Ascending aorta (tissue), 2 donors: ENCODE measurements at regions of chr4 and their contacts with region 1.

Region 1: DNA sequence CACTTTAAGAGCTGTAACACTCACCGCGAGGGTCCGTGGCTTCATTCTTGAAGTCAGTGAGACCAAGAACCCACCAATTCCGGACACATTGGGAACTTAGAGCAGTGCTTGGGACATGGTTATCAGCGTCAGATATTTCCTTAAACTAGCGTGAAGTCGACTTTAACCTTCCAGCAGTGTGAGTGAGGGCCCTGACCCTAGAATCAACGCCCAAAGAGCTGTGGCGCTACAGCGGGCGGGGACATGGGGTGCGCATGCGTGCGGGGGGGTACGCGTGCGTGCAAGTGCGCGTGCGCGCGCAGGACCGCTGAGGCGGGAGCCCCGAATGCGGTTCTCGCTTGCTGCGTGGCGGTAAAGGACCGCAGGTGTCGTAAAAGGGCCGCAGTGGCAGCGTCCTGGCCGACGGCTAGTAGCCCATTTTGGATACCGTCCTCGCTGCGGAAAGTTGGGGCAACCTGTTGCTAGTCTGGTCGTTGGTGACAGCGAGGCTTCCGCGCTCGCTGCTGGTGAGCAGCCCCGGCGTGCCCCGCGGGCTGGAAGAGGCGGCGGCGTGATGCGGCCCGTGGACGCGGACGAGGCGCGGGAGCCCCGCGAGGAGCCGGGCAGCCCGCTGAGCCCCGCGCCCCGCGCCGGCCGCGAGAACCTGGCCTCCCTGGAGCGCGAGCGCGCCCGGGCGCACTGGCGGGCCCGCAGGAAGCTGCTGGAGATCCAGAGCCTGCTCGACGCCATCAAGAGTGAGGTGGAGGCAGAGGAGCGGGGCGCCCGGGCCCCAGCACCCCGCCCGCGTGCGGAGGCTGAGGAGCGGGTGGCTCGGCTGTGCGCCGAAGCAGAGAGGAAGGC is 19.8 kb upstream of the S100P start:
- DNase-seq: peak; percentile 84 to 96
- H3K4me3 ChIP-seq: peak overlapping the region; percentile 93
- H3K27ac ChIP-seq: peak overlapping the region; percentile 68 to 87
- H3K4me1 ChIP-seq: peaks cover 14 to 26% of the 10 kb centered on the region in 2 donors
- H3K27me3 ChIP-seq: no peaks in the 10 kb centered on the region
- CTCF ChIP-seq: no peak

Region 2: DNA sequence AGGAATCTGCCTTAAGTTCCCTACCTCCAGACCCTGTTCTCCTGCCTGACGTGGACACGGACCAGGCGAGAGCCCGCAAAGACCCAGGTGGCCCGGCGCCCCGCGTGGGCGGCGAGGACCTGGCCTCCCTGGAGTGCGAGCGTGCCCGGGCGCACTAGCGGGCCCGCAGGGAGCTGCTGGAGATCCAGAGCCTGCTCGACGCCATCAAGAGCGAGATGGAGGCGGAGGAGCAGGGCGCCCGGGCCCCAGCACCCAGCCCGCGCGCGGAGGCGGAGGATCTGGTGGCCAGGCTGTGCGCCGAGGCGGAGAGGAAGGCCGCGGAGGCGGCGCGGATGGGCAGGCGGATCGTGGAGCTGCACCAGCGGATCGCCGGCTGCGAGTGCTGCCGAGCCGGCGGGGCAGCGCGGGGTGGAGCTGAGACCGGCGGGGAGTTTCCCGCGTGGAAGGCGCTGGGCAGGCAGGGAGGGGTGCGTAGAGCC is 15.2 kb before region 1 on chr4:
- intact Hi-C with region 1: loop called (anchors 2 kb)
- DNase-seq: no peak
- H3K4me3 ChIP-seq: peak overlapping the region; percentile 62 to 69
- H3K27ac ChIP-seq: peak overlapping the region; percentile 76 to 88
- H3K4me1 ChIP-seq: peaks cover 4 to 6% of the 10 kb centered on the region in 2 donors
- H3K27me3 ChIP-seq: no peaks in the 10 kb centered on the region
- CTCF ChIP-seq: no peak

Region 3: DNA sequence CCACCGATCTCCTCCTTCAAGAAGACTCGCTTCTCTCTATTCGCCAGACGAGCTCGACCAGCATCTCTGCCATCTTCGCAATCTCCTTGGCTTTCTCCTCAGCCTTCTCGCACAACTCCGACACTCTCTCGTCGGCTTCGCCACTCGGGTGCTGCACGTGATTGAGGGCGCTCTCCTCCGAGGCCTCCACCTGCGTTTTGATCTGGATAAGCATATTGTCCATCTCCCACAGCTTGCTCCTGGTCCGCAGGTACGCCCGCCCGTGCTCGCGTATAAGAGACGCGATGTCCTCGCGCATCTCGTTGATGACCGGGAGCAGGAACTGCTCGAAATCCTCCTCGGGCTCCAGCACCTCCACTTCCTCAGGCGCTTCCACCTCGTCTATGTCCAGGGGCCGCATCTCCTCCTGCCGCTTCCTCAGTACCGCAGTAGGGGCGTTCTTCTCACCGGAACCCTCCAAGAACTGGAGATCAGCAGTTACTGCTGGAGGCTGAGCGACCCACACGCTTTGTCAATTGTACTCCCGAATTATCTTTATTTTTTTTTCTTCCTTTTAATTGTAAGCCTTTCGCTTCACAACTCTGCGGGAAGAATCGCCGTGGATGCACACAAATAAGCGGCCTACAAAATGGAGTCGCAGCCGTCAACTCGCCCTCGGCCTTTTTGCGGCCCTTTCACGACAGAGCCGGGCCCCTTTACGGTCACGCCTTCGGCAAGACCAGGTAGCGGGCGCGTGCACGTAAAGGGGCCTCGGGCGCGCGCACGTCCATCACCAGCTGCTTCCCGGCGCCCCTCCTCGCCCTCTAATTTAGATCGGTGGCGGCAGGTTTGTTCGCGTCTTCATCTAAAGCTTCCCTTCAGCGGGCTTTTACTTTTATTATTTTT is 35.6 kb after region 1 on chr4 and contains the start of gene MRFAP1L1:
- intact Hi-C with region 1: loop called (anchors 2 kb)
- DNase-seq: peak; percentile 83 to 98
- H3K4me3 ChIP-seq: peak within 1 kb of the TSS; percentile 92 to 99
- H3K27ac ChIP-seq: peak within 1 kb of the TSS; percentile 83 to 85
- H3K4me1 ChIP-seq: peaks cover 0 to 28% of the 10 kb centered on the region in 2 donors
- H3K27me3 ChIP-seq: no peaks in the 10 kb centered on the region
- CTCF ChIP-seq: peak in 1 of 3 experiments; percentile 16
- total RNA-seq, gene MRFAP1L1: 34.1 TPM

Region 4: DNA sequence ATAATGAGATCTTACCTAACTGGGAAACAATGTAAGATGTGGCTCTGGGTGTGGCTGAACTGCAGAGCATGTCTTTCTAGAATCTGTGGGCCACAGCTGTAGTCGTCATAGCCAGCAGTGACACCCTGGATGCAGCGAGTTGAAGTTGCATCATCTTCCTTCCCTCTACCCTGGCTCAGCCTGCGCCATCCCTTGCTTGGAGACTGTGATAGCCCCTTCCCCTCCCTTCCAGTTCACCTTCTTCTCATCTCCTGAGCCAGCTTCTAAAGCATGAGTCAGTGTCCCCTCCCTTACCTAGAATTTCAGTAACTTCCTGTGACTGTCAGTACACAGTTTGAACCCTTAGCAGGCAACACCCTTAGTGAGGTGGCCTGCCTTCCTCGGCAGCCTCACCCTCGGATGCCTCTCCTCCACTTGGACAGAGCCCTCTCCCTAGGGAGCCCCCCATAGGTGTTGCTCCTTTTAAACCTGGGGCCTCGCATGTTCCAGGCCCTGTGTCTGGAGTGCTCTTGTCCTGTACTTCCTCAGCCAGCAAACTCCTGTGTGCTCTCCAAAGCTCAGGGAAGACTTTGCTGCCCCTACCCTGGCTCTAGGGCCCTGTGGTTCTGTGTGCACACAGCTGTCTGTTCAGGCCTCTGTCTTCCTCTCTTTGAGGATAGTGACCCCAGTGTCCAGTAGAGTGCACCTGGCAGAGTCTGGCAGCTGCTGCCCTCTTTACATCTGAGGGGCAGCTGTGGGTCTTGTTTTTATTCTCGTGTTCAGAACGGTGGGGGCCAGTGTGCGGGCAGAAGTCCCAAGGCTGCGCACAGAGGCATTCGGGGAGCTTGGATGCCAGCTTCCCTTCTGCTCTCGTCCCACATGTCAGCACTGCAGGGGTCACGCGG is 325.5 kb after region 1 on chr4:
- intact Hi-C with region 1: no loop called
- DNase-seq: peak in 1 of 2 donors; percentile 40
- H3K4me3 ChIP-seq: no peak overlapping the region
- H3K27ac ChIP-seq: no peak overlapping the region
- H3K4me1 ChIP-seq: no peaks in the 10 kb centered on the region
- H3K27me3 ChIP-seq: no peaks in the 10 kb centered on the region
- CTCF ChIP-seq: no peak